Ovary (tissue), 10 donors: ENCODE measurements at regions of chr1 and their contacts with region 1.

Region 1: DNA sequence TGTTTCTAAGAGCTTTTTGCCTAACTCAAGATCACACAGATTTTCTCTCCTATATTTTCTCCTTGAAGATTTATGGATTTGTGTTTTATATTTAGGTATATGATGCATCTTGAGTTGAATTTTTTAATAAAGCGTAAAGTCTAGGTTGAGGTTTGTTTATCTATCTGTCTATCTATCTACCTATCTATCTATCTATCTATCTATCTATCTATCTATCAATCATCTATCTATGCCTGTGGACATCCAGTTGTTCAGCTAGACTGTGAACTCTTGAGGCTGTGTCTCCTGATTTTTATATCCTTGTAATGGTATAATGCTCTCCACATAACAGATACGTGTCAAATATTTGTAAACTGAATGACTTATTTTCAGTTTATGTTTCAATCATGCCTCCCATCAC is 120.1 kb downstream of the DNAH14 start:
- DNase-seq: no peak
- H3K4me3 ChIP-seq: no peak overlapping the region
- H3K27ac ChIP-seq: no peak overlapping the region
- H3K4me1 ChIP-seq: no peaks in the 10 kb centered on the region
- H3K27me3 ChIP-seq: no peaks in the 10 kb centered on the region
- CTCF ChIP-seq: no peak
- EP300 ChIP-seq: no peak
- POLR2A ChIP-seq: no peak

Region 2: GRCh38 chr1:224863970-224864369 is 185.6 kb before region 1 on chr1:
- intact Hi-C with region 1: no loop called
- DNase-seq: no peak
- H3K4me3 ChIP-seq: no peak overlapping the region
- H3K27ac ChIP-seq: no peak overlapping the region
- H3K4me1 ChIP-seq: no peaks in the 10 kb centered on the region
- H3K27me3 ChIP-seq: no peaks in the 10 kb centered on the region
- CTCF ChIP-seq: no peak
- EP300 ChIP-seq: no peak
- POLR2A ChIP-seq: no peak

Region 3: GRCh38 chr1:225114354-225114990 is 64.9 kb after region 1 on chr1:
- intact Hi-C with region 1: no loop called
- DNase-seq: no peak
- H3K4me3 ChIP-seq: no peak overlapping the region
- H3K27ac ChIP-seq: no peak overlapping the region
- H3K4me1 ChIP-seq: no peaks in the 10 kb centered on the region
- H3K27me3 ChIP-seq: no peaks in the 10 kb centered on the region
- CTCF ChIP-seq: no peak
- EP300 ChIP-seq: no peak
- POLR2A ChIP-seq: no peak

Region 4: GRCh38 chr1:225689882-225690459 is 640.4 kb after region 1 on chr1:
- intact Hi-C with region 1: loop called in 1 of 4 experiments (anchors 10 kb)
- DNase-seq: no peak
- H3K4me3 ChIP-seq: no peak overlapping the region
- H3K27ac ChIP-seq: no peak overlapping the region
- H3K4me1 ChIP-seq: peaks cover 11% of the 10 kb centered on the region
- H3K27me3 ChIP-seq: no peaks in the 10 kb centered on the region
- CTCF ChIP-seq: no peak
- EP300 ChIP-seq: no peak
- POLR2A ChIP-seq: no peak